PC-3 (cell line): ENCODE measurements at regions of chr4 and their contacts with region 1.

Region 1: DNA sequence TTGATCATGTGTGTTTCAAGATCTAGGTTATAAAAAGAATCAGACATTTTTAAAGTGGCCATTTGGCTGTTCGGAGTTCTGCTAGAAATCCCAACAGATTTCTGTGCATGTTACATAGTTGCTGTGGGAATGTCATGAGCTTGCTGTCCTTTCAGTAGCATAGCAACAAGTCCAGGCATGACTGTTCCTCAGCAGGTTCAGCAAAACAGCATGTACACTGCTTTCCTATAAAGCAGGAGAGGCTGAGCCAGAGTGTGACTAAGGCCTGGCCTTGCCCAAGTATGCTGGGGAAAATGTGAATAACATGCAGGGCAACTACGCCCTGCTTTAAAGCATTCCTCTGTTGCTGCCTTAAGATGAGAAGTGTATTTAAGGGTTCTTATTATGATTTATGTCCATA is 217.1 kb upstream of the SMIM31 start:
- DNase-seq: peak; percentile 81
- ATAC-seq: peak; percentile 100
- H3K4me3 ChIP-seq: no peak overlapping the region
- H3K27ac ChIP-seq: 0 out of 2 replicates have a peak overlapping the region, but pooled peaks have one; percentile 6
- H3K4me1 ChIP-seq: peaks cover 10% of the 10 kb centered on the region
- H3K27me3 ChIP-seq: no peaks in the 10 kb centered on the region
- CTCF ChIP-seq: no peak

Region 2: GRCh38 chr4:164440199-164440598 is 96.6 kb before region 1 on chr4:
- CTCF ChIA-PET with region 1: no interaction called
- POLR2A ChIA-PET with region 1: no interaction called
- intact Hi-C with region 1: loop called (anchors 10 kb)
- DNase-seq: peak; percentile 87
- ATAC-seq: peak; percentile 88
- H3K4me3 ChIP-seq: peak overlapping the region; percentile 37
- H3K27ac ChIP-seq: peak overlapping the region; percentile 86
- H3K4me1 ChIP-seq: peaks cover 44% of the 10 kb centered on the region
- H3K27me3 ChIP-seq: no peaks in the 10 kb centered on the region
- CTCF ChIP-seq: no peak

Region 3: DNA sequence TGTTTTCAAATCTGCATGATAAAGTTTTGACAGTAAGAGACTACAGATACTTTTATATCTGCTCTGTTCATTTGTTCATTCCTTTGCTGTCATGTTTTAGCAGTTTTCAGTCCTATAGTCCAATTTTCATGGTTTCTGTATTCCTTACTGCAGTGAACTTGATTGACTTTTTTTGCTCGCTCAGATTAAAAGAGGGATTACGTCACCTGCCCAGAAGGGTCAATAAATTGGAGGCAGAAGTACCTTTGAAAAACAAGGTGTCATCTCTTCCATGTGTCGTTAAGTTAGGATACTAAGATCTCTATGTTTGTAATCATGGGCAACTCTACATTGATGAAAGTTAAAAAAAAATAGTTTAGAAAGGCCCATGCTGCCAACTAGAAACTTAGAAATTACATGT is 32.9 kb before region 1 on chr4:
- CTCF ChIA-PET with region 1: no interaction called
- POLR2A ChIA-PET with region 1: no interaction called
- intact Hi-C with region 1: loop called (anchors 2 kb)
- DNase-seq: no peak
- ATAC-seq: no peak
- H3K4me3 ChIP-seq: no peak overlapping the region
- H3K27ac ChIP-seq: no peak overlapping the region
- H3K4me1 ChIP-seq: peaks cover 7% of the 10 kb centered on the region; the same call in 1 of the 2 replicates
- H3K27me3 ChIP-seq: no peaks in the 10 kb centered on the region
- CTCF ChIP-seq: no peak

Region 4: DNA sequence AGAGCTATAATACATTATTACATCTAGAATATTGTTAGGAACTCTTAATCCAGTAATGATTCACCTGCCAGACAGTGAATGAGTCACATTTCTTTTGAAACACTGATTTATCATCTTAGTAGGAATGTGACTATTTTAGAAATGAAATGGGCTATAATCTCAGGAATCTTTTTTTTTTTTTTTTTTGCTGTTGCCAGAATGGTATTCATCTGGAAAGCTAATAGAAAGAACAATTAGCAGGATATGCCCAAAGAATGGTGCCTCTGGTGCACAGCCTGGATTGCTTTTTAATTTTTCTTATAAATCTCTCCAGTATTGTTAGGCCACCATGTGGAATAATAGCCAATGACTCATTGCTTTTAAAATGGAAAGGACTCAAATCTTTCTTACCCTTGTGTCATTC is 36.1 kb after region 1 on chr4:
- CTCF ChIA-PET with region 1: no interaction called
- POLR2A ChIA-PET with region 1: no interaction called
- intact Hi-C with region 1: loop called (anchors 2 kb)
- DNase-seq: peak; percentile 80
- ATAC-seq: peak; percentile 90
- H3K4me3 ChIP-seq: no peak overlapping the region
- H3K27ac ChIP-seq: peak overlapping the region; percentile 67
- H3K4me1 ChIP-seq: peaks cover 22% of the 10 kb centered on the region
- H3K27me3 ChIP-seq: no peaks in the 10 kb centered on the region
- CTCF ChIP-seq: no peak

Region 5: DNA sequence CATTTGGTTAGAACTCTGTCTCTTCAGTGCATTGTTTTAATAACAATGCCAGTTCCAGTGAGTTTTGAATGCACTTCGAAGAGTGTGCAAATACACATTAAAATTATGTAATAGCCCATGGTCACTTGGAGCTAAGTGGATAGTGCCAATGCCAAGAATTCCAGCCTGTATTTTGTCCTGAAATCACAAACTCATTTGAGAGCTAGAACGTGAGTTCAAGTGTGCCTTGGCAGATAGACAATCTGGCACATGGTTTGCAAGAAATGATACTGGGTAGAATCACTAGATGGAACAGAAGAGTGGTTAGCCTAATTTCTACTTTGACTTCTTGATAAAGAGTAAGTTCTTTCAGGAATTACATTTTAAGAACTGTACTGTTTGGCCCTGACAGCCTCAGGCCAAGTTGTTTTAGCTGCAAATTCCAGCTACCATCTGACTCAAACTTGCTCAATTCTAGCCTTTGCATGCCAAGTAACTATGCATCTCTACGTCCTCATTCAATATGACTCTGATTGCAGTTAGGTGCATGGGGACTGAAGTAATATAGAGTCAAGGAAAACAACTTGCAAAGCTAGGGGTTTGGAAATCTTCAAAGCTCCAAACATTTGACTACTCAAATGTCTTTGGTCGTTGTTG is 85.2 kb after region 1 on chr4:
- CTCF ChIA-PET with region 1: no interaction called
- POLR2A ChIA-PET with region 1: no interaction called
- intact Hi-C with region 1: no loop called
- DNase-seq: peak; percentile 19
- ATAC-seq: no peak
- H3K4me3 ChIP-seq: no peak overlapping the region
- H3K27ac ChIP-seq: no peak overlapping the region
- H3K4me1 ChIP-seq: no peaks in the 10 kb centered on the region
- H3K27me3 ChIP-seq: no peaks in the 10 kb centered on the region
- CTCF ChIP-seq: no peak

Region 6: GRCh38 chr4:165027762-165028402 is 491.1 kb after region 1 on chr4:
- CTCF ChIA-PET with region 1: no interaction called
- POLR2A ChIA-PET with region 1: no interaction called
- intact Hi-C with region 1: no loop called
- DNase-seq: no peak
- ATAC-seq: no peak
- H3K4me3 ChIP-seq: no peak overlapping the region
- H3K27ac ChIP-seq: no peak overlapping the region
- H3K4me1 ChIP-seq: no peaks in the 10 kb centered on the region
- H3K27me3 ChIP-seq: no peaks in the 10 kb centered on the region
- CTCF ChIP-seq: no peak